ENCODE measurements at regions of chr7 and their contacts with region 1.

Region 1: DNA sequence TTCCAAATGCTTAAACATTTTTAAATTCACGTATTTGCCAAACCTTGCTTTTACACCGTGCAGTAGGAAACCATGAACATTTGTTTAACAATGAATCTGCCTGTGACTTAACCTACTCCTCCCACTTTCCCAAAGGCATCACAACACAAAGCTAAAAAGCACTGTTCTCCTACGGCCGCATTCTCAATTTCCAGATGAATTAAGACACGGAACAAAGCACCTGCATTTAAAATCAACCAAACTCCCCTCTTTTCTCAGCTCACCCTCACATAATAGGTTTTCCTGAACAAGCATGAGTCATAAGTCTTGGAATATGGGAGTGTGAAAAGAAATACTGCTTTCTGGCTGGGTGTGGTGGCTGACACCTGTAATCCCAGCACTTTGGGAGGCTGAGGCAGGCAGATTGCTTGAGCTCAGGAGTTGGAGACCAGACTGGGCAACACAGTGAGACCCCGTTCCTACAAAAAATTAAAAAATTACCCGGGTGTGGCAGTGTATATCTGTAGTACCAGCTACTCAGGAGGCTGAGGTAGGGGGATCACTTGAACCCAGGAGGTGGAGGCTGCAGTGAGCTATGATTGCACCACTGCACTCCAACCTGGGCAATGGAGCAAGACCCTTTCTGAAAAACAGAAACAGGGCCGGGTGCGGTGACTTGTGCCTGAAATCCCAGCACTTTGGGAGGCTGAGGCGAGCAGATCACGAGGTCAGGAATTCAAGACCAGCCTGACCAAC is 51.7 kb upstream of the CYTH3 start:
- DNase-seq: no peak
- H3K4me3 ChIP-seq: no peak overlapping the region
- H3K27ac ChIP-seq: no peak overlapping the region
- H3K4me1 ChIP-seq: peaks cover 2% of the 10 kb centered on the region
- H3K27me3 ChIP-seq: no peaks in the 10 kb centered on the region
- CTCF ChIP-seq: no peak

Region 2: GRCh38 chr7:5854738-5855137 is 469.4 kb before region 1 on chr7:
- CTCF ChIA-PET with region 1: no interaction called
- dilution Hi-C with region 1: no loop called
- in situ Hi-C with region 1: no loop called
- intact Hi-C with region 1: loop called (anchors 1 kb)
- DNase-seq: no peak
- H3K4me3 ChIP-seq: no peak overlapping the region
- H3K27ac ChIP-seq: no peak overlapping the region
- H3K4me1 ChIP-seq: no peaks in the 10 kb centered on the region
- H3K27me3 ChIP-seq: no peaks in the 10 kb centered on the region
- CTCF ChIP-seq: no peak

Region 3: DNA sequence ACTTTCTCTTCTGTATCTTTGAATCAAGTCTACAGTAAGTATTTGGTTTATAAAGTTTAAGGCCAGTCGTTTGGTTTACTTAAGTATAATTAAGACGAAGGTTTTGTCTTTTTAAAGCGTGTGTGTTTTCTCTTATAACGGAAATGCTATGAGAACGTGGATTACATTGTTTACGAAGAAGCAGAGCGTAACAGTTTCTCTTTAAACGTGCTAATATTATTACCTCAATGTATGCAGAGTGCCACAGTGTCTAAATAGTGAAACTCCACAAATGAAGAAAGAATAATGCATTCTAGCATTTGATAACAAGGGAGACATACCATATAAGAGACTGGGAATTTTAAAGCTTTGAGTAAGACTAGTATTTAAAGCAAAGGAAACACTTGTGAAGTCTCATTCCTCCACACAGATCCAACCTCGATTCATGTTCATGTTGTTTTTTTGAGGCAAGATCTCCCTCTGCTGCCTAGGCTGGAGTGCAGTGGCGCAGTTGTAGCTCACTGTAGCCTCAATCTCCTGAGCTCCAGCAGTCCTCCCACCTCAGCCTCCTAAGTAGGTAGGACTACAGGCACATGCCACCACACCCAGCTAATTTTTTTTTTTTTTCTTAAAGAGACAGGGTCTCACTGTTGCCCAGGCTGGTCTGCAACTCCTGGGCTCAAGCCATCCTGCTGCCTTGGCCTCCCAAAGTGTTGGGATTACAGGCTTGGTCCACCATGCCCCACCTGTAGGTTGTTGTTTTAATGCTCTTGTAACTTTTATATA is 217.8 kb before region 1 on chr7:
- CTCF ChIA-PET with region 1: no interaction called
- dilution Hi-C with region 1: no loop called
- in situ Hi-C with region 1: no loop called
- intact Hi-C with region 1: loop called (anchors 1 kb)
- DNase-seq: peak; percentile 49
- H3K4me3 ChIP-seq: peak overlapping the region; percentile 85 to 96 (median 93)
- H3K27ac ChIP-seq: peak overlapping the region; percentile 52
- H3K4me1 ChIP-seq: peaks cover 8% of the 10 kb centered on the region
- H3K27me3 ChIP-seq: no peaks in the 10 kb centered on the region
- CTCF ChIP-seq: peak in 1 of 2 donors; percentile 37

Region 4: DNA sequence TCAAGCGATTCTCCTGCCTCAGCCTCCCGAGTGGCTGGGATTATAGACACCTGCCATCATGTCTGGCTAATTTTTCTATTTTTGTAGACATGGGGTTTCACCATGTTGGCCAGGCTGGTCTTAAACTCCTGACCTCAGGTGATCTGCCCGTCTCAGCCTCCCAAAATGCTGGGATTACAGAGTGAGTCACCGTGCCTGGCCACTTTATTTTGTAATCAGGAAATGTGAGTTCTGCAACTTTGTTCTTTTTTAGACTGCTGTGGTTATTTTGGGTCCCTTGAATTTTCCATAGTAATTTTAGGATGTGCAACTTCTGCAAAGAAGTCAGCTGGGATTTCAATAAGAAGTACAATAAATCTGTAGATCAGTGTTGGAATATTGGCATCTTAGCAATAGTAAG is 148.5 kb before region 1 on chr7:
- CTCF ChIA-PET with region 1: no interaction called
- dilution Hi-C with region 1: no loop called
- in situ Hi-C with region 1: no loop called
- intact Hi-C with region 1: loop called (anchors 5 kb)
- DNase-seq: peak; percentile 60
- H3K4me3 ChIP-seq: no peak overlapping the region
- H3K27ac ChIP-seq: no peak overlapping the region
- H3K4me1 ChIP-seq: peaks cover 25% of the 10 kb centered on the region
- H3K27me3 ChIP-seq: no peaks in the 10 kb centered on the region
- CTCF ChIP-seq: no peak

Region 5: GRCh38 chr7:6435486-6436384 is 111.6 kb after region 1 on chr7:
- CTCF ChIA-PET with region 1: no interaction called
- dilution Hi-C with region 1: no loop called
- in situ Hi-C with region 1: no loop called
- intact Hi-C with region 1: loop called (anchors 2 kb)
- DNase-seq: peak; percentile 59
- H3K4me3 ChIP-seq: no peak overlapping the region
- H3K27ac ChIP-seq: no peak overlapping the region
- H3K4me1 ChIP-seq: peaks cover 11% of the 10 kb centered on the region
- H3K27me3 ChIP-seq: no peaks in the 10 kb centered on the region
- CTCF ChIP-seq: peak; percentile 94 to 95